ENCODE measurements at regions of chr2 and their contacts with region 1.

Region 1: DNA sequence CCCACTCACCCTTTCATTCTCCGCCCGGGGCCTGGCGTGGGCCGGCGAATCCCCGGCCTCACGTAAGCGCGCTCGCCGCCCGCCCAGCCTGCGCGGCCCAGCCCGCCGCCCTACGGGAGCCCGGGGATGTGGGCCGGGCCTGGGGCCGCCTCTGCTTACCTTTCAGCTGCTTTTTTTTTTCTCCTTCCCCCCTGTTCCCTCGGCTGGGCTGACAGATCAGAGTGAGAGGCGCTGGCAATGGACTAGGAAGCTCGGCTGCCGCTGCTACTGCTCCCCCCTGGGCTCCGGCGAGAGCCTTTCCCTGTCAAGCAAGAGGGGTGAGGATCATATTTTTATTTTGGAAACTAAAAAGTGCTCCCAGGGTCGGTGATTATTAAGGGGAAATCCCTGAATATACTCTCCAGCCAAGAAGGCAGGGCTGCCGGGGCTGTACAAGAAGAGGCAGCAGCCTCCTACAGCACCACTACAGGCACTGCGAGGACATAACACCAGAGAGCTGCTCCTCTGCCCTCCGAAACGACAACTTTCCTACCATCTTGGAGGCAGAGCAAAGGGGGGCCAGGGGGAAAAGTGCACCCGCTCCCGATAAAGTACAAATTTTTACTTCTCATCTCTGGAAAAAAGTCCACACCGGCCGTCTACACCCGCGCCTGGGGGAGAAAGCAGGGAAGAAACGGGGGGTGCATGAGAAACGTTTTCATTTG is at the start of gene INO80D:
- DNase-seq: peak; percentile 72
- H3K4me3 Mint-ChIP-seq: peak within 1 kb of the TSS; percentile 99
- H3K27ac Mint-ChIP-seq: peak within 1 kb of the TSS; percentile 99
- H3K4me1 Mint-ChIP-seq: peaks cover 30% of the 10 kb centered on the region
- H3K27me3 Mint-ChIP-seq: peaks cover 2% of the 10 kb centered on the region
- total RNA-seq, gene INO80D: 29.4 and 30.3 TPM in 2 replicates

Region 2: GRCh38 chr2:206031162-206031784 is 54.6 kb before region 1 on chr2:
- intact Hi-C with region 1: loop called (anchors 1 kb)
- DNase-seq: no peak
- H3K4me3 Mint-ChIP-seq: no peak overlapping the region
- H3K27ac Mint-ChIP-seq: peak overlapping the region; percentile 25
- H3K4me1 Mint-ChIP-seq: peaks cover 55% of the 10 kb centered on the region
- H3K27me3 Mint-ChIP-seq: no peaks in the 10 kb centered on the region

Region 3: GRCh38 chr2:206127656-206128055 is 41.8 kb after region 1 on chr2:
- intact Hi-C with region 1: loop called (anchors 5 kb)
- DNase-seq: no peak
- H3K4me3 Mint-ChIP-seq: no peak overlapping the region
- H3K27ac Mint-ChIP-seq: no peak overlapping the region
- H3K4me1 Mint-ChIP-seq: no peaks in the 10 kb centered on the region
- H3K27me3 Mint-ChIP-seq: no peaks in the 10 kb centered on the region

Region 4: DNA sequence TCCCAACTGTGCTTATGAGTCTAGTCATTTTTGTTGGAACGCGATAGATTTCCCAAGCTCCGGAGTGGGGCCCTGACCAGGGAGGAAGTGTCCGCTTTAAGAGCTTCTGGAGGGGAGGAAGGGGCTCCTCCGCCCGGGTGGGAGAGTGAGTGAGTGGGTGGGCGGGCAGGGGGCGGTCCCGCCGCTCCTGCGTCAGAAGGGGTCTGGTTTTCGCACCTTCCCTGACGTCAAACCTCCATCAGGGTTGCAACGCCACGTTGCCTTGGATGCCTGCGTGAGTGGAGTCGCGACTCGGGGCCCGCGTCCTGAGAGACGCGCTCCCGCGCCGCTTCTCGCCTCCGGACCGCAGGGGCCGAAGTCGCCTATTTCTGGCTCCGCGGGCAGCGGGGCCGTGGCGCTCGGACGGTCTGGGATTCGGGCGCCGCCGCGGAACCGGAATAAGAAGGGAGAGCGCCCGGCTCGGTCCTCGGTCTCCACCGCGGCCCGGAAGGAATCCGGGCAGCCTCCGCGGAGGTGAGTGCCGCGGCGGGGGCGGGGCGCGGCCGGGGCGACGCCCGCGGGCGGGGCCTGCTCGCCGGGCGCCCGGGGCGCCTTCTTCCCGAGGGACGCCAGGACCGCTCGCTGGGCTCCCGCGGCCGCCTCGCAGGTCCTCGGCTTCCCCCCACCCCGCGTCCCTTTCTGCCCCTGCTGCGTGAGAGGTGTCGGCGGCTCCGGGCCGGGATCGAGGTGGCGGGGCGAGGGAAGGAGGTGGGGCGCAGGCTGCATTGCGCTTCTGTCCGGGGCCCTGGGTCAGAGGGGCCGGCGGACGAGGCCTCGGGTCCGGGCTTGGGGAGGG is 188.8 kb after region 1 on chr2 and contains the start of gene ZDBF2:
- intact Hi-C with region 1: loop called (anchors 2 kb)
- DNase-seq: peak; percentile 46
- H3K4me3 Mint-ChIP-seq: peak within 1 kb of the TSS; percentile 87
- H3K27ac Mint-ChIP-seq: peak within 1 kb of the TSS; percentile 86
- H3K4me1 Mint-ChIP-seq: peaks cover 27% of the 10 kb centered on the region
- H3K27me3 Mint-ChIP-seq: peaks cover 48% of the 10 kb centered on the region
- total RNA-seq, gene ZDBF2: 9.3 and 11.4 TPM in 2 replicates

Region 5: GRCh38 chr2:206353685-206354084 is 267.8 kb after region 1 on chr2:
- intact Hi-C with region 1: no loop called
- DNase-seq: no peak
- H3K4me3 Mint-ChIP-seq: no peak overlapping the region
- H3K27ac Mint-ChIP-seq: no peak overlapping the region
- H3K4me1 Mint-ChIP-seq: no peaks in the 10 kb centered on the region
- H3K27me3 Mint-ChIP-seq: peaks cover 2% of the 10 kb centered on the region

Measured in activated T-helper 1 cell treated with anti-CD3 and anti-CD28 coated beads, Interleukin-12 subunit alpha, Interleukin-12 subunit beta, Interleukin-2, Interleukin-4 antibody, amounts not matched to agents 30 ng/mL and 10 ng/mL and 1 ng/mL, durations not matched to agents 14 hours and 24 hours and 36 hours (primary cell).